GM13976 (cell line): ENCODE measurements at regions of chr9 and their contacts with region 1.

Region 1: DNA sequence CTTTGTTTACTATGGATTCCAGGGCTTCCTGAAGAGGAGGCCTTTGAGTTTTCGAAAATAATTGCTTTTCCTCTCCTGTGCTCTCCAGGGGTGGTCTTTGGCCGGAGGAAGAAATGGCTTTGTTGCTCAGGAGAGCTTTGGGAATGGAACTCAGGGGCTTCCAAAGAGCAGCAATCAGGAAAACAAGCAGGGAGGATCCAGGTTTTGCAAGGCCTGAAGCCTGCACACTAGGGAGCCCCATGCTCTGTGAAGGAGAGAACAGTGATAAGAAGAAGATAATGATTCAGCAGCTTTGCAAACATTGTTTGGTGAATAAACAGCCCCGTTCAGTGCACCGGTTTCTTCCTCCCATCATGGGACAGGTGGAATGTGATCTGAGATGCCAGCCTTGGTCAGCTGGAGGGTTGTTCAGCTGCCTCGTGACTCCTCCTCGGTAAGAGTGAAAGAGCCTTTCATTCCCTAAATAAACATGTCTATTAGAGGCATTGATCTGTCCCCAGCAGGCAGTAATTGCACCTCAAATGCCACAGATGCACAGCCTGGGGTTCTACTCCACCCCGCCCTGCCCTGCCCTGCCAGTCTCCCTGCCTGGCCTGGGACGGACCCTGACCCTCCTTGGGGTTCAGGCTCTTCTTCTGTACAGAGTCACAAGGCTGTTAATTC is 11.5 kb upstream of the ALDH1B1 start:
- DNase-seq: no peak
- CTCF ChIP-seq: no peak

Region 2: GRCh38 chr9:38233343-38233742 is 147.7 kb before region 1 on chr9:
- in situ Hi-C with region 1: no loop called
- DNase-seq: no peak
- CTCF ChIP-seq: no peak

Region 3: GRCh38 chr9:38333047-38333446 is 48.0 kb before region 1 on chr9:
- in situ Hi-C with region 1: no loop called
- DNase-seq: no peak
- CTCF ChIP-seq: no peak

Region 4: GRCh38 chr9:38445154-38446043 is 64.4 kb after region 1 on chr9:
- in situ Hi-C with region 1: loop called (anchors 10 kb)
- DNase-seq: peak; percentile 41
- CTCF ChIP-seq: no peak

Region 5: DNA sequence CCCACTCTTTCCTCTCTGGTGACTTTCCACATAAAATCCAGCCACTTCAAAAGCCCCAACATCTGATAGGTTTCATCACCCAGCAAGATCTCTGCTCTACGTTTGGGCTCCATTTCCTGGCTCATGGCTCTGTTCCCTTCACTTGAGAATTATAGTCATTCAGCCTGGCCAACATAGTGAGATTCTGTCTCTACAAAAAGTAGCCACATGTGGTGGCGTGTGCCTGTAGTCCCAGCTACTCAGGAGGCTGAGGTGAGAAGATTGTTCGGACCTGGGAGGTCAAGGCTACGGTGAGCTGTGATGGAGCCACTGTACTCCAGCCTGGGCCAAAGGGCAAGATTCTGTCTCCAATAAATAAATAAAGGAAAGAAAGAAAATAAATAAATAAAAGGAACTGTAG is 126.6 kb after region 1 on chr9:
- in situ Hi-C with region 1: no loop called
- DNase-seq: no peak
- CTCF ChIP-seq: no peak